Caco-2 (cell line): ENCODE measurements at regions of chr11 and their contacts with region 1.

Region 1: GRCh38 chr11:122505304-122506006 is 150.1 kb upstream of the UBASH3B start:
- DNase-seq: peak; percentile 76 to 86
- H3K4me3 ChIP-seq: no peak overlapping the region
- H3K4me3 Mint-ChIP-seq: no peak overlapping the region
- H3K27ac Mint-ChIP-seq: no peak overlapping the region
- H3K4me1 ChIP-seq: no peaks in the 10 kb centered on the region
- H3K4me1 Mint-ChIP-seq: no peaks in the 10 kb centered on the region
- H3K27me3 ChIP-seq: no peaks in the 10 kb centered on the region; the same call in 1 of the 2 replicates
- H3K27me3 Mint-ChIP-seq: peaks cover 28% of the 10 kb centered on the region
- CTCF ChIP-seq: peak; percentile 94 to 98

Region 2: DNA sequence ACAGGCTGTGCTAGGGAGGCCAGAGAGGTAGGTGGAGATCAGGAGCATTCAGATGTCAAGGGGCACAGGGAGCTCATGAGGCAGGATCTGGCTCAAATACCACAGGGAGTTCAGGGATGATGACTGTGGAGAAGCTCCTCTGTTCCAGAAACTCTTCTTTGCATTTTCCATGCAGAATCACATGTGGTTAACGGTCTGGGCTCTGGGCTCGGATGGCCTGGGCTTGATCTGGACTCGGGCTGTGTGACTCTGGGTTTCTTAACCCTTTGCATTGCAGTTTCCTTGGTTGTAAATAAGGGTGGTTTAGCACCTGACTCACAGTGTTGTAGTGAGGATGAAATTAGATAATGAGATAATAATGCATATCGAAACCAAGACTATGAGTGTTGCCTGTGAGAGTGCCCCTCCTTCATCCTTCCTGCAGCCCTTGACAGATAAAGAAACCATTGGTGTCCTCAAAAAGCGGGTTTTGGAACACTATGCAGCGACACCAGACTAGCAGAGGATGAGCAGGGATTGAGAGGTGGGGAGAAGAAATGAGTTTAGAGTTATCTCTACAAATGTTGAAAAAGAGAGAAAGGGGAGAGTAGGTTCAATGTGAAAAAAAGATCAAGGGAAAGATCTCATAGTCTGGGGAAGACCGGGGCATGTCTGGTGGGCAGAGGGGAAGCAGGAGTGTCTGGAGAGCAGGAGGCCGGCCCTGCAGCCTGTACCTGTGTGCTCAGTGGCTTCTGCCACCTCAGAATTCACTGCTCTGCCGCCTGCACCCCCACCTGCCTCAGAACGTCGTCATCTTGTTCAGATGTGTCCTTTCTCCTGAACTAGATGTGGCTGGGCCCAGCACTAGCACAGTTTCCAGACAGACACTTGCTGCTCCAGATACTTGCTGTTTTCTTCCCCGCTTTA is 854.9 kb before region 1 on chr11:
- CTCF ChIA-PET with region 1: interaction called, 6 read pairs
- POLR2A ChIA-PET with region 1: no interaction called
- intact Hi-C with region 1: loop called (anchors 2 kb)
- DNase-seq: no peak
- H3K4me3 ChIP-seq: no peak overlapping the region
- H3K4me3 Mint-ChIP-seq: no peak overlapping the region
- H3K27ac Mint-ChIP-seq: no peak overlapping the region
- H3K4me1 ChIP-seq: peaks cover 12% of the 10 kb centered on the region; the same call in 1 of the 2 replicates
- H3K4me1 Mint-ChIP-seq: peaks cover 7% of the 10 kb centered on the region
- H3K27me3 ChIP-seq: peaks cover 1% of the 10 kb centered on the region; the same call in 1 of the 2 replicates
- H3K27me3 Mint-ChIP-seq: peaks cover 31% of the 10 kb centered on the region
- CTCF ChIP-seq: no peak

Region 3: DNA sequence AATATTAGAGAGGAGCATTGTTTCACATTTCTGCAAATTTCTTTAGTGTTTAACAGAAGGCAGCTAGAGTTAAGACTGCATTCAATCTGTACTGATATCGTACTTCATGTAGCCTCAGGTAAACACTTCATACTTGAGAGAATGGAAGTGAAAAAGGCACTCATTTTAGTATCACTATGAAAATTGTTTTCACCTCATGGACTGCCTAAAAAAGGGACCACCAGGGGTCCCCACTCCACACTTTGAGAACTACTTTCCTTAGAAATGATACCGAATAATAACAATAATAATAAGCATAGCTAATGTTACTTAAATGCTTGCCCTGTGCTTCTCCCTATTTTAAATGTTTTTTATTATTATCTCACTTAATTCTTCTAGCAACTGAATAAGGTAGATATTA is 484.6 kb before region 1 on chr11:
- CTCF ChIA-PET with region 1: no interaction called
- POLR2A ChIA-PET with region 1: no interaction called
- intact Hi-C with region 1: loop called (anchors 1 kb)
- DNase-seq: peak in 1 of 2 experiments; percentile 22
- H3K4me3 ChIP-seq: no peak overlapping the region
- H3K4me3 Mint-ChIP-seq: no peak overlapping the region
- H3K27ac Mint-ChIP-seq: no peak overlapping the region
- H3K4me1 ChIP-seq: no peaks in the 10 kb centered on the region
- H3K4me1 Mint-ChIP-seq: no peaks in the 10 kb centered on the region
- H3K27me3 ChIP-seq: no peaks in the 10 kb centered on the region; the same call in 1 of the 2 replicates
- H3K27me3 Mint-ChIP-seq: peaks cover 3% of the 10 kb centered on the region
- CTCF ChIP-seq: peak; percentile 58 to 60

Region 4: DNA sequence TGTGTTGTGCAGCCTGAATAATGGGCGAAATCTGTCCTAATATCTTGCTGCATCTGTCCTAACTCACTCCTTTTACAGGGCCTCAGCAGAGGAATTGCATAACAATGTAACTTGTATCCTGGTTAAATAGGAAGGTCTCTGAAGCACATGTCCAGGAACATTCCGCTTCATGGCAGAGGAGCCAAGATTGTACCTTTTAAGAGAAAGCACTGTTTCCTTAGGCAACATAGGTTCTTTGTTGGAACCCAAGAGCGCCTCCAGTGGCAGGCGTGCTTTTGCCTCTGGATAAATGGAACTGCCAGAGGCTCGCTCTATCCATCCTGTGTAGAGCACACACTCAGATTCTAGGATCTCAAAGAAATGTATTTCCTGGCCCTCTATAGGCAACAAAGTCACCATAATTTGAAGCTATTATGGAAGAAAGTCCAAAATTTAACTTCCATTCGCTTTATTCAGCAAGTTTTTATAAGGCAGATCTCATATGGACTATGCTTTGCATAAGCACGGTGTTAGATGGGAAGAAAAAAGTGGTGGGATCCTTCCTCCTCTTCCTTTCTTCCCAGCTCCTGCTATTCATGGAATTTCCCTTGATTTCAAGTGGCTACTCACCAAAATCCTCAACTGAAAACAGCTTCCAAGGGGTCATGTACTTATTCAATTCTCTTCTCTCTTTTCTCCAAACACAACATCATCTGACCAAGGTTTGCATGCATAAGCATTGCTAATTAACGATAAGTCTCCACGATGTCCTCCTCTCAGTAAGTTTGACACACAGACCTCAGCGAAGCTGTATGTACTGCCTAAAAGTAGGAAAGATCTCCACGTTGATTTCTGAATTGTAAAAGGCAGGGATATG is 389.7 kb before region 1 on chr11 and contains the start of gene BLID:
- CTCF ChIA-PET with region 1: no interaction called
- POLR2A ChIA-PET with region 1: no interaction called
- intact Hi-C with region 1: loop called (anchors 5 kb)
- DNase-seq: peak; percentile 62 to 65
- H3K4me3 ChIP-seq: no peak within 1 kb of the TSS
- H3K4me3 Mint-ChIP-seq: no peak within 1 kb of the TSS
- H3K27ac Mint-ChIP-seq: no peak within 1 kb of the TSS
- H3K4me1 ChIP-seq: no peaks in the 10 kb centered on the region
- H3K4me1 Mint-ChIP-seq: no peaks in the 10 kb centered on the region
- H3K27me3 ChIP-seq: no peaks in the 10 kb centered on the region
- H3K27me3 Mint-ChIP-seq: peaks cover 24% of the 10 kb centered on the region
- CTCF ChIP-seq: peak; percentile 67 to 89
- total RNA-seq, gene BLID: not detected in 2 replicates

Region 5: DNA sequence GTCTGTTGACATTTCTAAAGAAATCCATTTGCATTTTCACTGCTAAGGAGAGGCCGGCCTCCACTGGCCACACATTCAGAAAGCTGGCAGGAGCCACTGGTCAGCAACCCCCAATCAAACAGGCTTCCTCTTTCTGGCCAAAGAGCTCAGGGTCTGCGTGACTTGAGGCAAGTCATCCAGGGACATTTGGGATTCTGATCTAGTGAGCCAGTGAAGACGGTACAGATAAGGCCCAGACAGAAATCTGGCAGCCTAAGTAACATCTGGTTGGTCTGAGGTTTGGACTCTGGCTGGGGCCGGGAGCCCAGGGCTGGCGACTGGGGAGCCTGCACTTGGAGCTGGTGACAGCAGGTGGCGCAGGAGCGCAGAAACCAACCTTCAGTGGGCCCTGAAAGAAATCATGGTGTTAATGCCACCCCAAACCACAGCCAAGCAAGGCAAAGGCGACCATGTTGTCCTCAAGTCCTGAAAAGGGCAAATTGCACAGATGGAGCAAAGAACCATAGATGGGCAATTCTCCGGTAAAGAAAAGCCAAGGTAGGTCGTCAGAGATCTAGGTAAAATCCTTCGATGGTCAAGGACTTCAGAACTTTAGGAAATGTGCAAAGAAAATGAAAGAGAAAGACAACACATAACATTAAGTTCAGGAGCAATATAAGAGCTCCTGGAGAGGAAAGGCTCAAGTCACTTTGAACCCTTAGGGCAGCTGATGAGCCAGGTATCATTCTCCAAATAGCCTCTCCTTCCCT is 290.0 kb before region 1 on chr11:
- CTCF ChIA-PET with region 1: interaction called, 19 read pairs
- POLR2A ChIA-PET with region 1: no interaction called
- intact Hi-C with region 1: loop called (anchors 1 kb)
- DNase-seq: peak; percentile 68 to 82
- H3K4me3 ChIP-seq: no peak overlapping the region
- H3K4me3 Mint-ChIP-seq: no peak overlapping the region
- H3K27ac Mint-ChIP-seq: no peak overlapping the region
- H3K4me1 ChIP-seq: no peaks in the 10 kb centered on the region
- H3K4me1 Mint-ChIP-seq: no peaks in the 10 kb centered on the region
- H3K27me3 ChIP-seq: no peaks in the 10 kb centered on the region
- H3K27me3 Mint-ChIP-seq: peaks cover 12% of the 10 kb centered on the region
- CTCF ChIP-seq: peak; percentile 98 to 99

Region 6: GRCh38 chr11:122293296-122294023 is 212.0 kb before region 1 on chr11:
- CTCF ChIA-PET with region 1: no interaction called
- POLR2A ChIA-PET with region 1: no interaction called
- intact Hi-C with region 1: loop called (anchors 1 kb)
- DNase-seq: no peak
- H3K4me3 ChIP-seq: no peak overlapping the region
- H3K4me3 Mint-ChIP-seq: no peak overlapping the region
- H3K27ac Mint-ChIP-seq: no peak overlapping the region
- H3K4me1 ChIP-seq: no peaks in the 10 kb centered on the region
- H3K4me1 Mint-ChIP-seq: no peaks in the 10 kb centered on the region
- H3K27me3 ChIP-seq: no peaks in the 10 kb centered on the region
- H3K27me3 Mint-ChIP-seq: peaks cover 3% of the 10 kb centered on the region
- CTCF ChIP-seq: peak in 1 of 2 experiments; percentile 34

Region 7: GRCh38 chr11:122439911-122440810 is 65.3 kb before region 1 on chr11:
- CTCF ChIA-PET with region 1: no interaction called
- POLR2A ChIA-PET with region 1: interaction called, 7 read pairs
- intact Hi-C with region 1: loop called (anchors 2 kb)
- DNase-seq: peak; percentile 72 to 87
- H3K4me3 ChIP-seq: peak overlapping the region; percentile 28
- H3K4me3 Mint-ChIP-seq: peak overlapping the region; percentile 73
- H3K27ac Mint-ChIP-seq: peak overlapping the region; percentile 85
- H3K4me1 ChIP-seq: peaks cover 20% of the 10 kb centered on the region
- H3K4me1 Mint-ChIP-seq: peaks cover 12% of the 10 kb centered on the region
- H3K27me3 ChIP-seq: no peaks in the 10 kb centered on the region
- H3K27me3 Mint-ChIP-seq: no peaks in the 10 kb centered on the region
- CTCF ChIP-seq: no peak

Region 8: DNA sequence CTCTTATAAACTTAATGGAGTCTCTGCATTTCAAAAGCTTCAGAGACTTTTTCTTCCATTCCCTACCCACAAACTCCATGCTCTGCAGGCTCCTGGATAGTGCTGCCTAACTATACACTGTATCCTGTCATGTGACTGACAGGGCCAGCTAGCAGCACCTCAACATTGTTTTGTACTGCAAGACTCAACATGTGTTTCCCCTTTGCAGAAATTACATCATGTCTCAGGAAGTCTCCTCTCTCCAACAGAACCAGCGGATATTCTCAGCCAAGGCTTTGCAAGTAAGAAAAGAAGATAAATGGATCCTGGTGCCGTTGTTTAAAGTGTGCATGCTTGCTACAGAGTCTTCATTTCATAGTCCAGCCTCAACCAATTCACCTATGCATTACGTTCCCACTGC is 13.9 kb before region 1 on chr11:
- CTCF ChIA-PET with region 1: no interaction called
- POLR2A ChIA-PET with region 1: no interaction called
- intact Hi-C with region 1: no loop called
- DNase-seq: no peak
- H3K4me3 ChIP-seq: no peak overlapping the region
- H3K4me3 Mint-ChIP-seq: no peak overlapping the region
- H3K27ac Mint-ChIP-seq: no peak overlapping the region
- H3K4me1 ChIP-seq: no peaks in the 10 kb centered on the region
- H3K4me1 Mint-ChIP-seq: no peaks in the 10 kb centered on the region
- H3K27me3 ChIP-seq: no peaks in the 10 kb centered on the region
- H3K27me3 Mint-ChIP-seq: peaks cover 16% of the 10 kb centered on the region
- CTCF ChIP-seq: no peak